Ovary (tissue), 10 donors: ENCODE measurements at regions of chr7 and their contacts with region 1.

Region 1: GRCh38 chr7:44240983-44241510 is 40.3 kb downstream of the YKT6 start:
- DNase-seq: peak; percentile 63 to 73 (median 72)
- H3K4me3 ChIP-seq: no peak overlapping the region
- H3K27ac ChIP-seq: no peak overlapping the region
- H3K4me1 ChIP-seq: no peaks in the 10 kb centered on the region
- H3K27me3 ChIP-seq: no peaks in the 10 kb centered on the region
- CTCF ChIP-seq: peak; percentile 34 to 64 (median 51)
- EP300 ChIP-seq: no peak
- POLR2A ChIP-seq: no peak

Region 2: GRCh38 chr7:44477063-44477830 is 236.2 kb after region 1 on chr7:
- intact Hi-C with region 1: loop called in 3 of 4 experiments (anchors 2 to 10 kb)
- DNase-seq: peak in 4 of 5 donors; percentile 12 to 45 (median 27)
- H3K4me3 ChIP-seq: no peak overlapping the region
- H3K27ac ChIP-seq: no peak overlapping the region
- H3K4me1 ChIP-seq: no peaks in the 10 kb centered on the region
- H3K27me3 ChIP-seq: no peaks in the 10 kb centered on the region
- CTCF ChIP-seq: peak in 2 of 3 donors; percentile 55 to 58
- EP300 ChIP-seq: no peak
- POLR2A ChIP-seq: no peak

Region 3: GRCh38 chr7:44490351-44491200 is 249.5 kb after region 1 on chr7 and contains the start of gene NUDCD3:
- intact Hi-C with region 1: loop called in 1 of 4 experiments (anchors 5 kb)
- DNase-seq: peak; percentile 77 to 86 (median 80)
- H3K4me3 ChIP-seq: peak within 1 kb of the TSS; percentile 83
- H3K27ac ChIP-seq: peak within 1 kb of the TSS; percentile 90 to 97
- H3K4me1 ChIP-seq: peaks cover 11% of the 10 kb centered on the region
- H3K27me3 ChIP-seq: no peaks in the 10 kb centered on the region
- CTCF ChIP-seq: peak in 1 of 3 donors; percentile 21
- EP300 ChIP-seq: peak; percentile 37
- POLR2A ChIP-seq: peak; percentile 45
- total RNA-seq, gene NUDCD3: 32.1 to 117 (median 102) TPM

Region 4: DNA sequence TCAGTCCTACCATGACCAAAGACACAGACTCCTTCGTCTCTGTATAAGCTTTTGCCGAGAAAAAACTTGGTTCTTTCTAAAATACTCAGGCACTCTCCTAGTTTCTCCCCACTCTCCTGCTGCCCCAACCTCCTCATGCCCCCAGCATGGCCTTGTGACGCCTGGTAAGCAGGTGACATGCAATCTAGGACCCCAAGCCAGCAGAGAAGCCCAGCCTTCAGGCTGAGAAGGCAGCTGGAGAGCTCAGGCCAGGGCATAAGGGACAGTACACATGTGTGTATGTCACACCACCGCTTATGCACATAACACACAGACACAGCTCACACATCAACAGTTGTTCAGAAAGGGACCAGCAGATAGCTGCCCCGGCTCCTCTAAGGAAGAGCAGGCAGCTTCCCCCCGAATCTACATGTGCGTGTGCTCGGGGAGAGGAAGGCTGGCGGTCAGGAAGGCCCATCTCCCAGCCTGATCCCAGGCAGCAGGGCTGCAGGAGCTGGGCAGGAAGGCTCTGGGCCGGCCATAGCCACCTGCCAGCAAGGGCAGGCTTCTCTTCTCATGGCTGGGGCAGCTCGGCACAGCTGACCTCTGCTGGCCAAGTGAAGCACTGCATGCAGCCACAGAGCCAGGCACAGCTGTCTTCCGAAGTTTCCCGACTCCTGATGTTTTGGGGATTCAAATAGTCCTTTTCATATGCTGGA is 324.2 kb after region 1 on chr7:
- intact Hi-C with region 1: loop called (anchors 2 to 10 kb)
- DNase-seq: peak; percentile 36 to 81 (median 68)
- H3K4me3 ChIP-seq: no peak overlapping the region
- H3K27ac ChIP-seq: no peak overlapping the region
- H3K4me1 ChIP-seq: no peaks in the 10 kb centered on the region
- H3K27me3 ChIP-seq: no peaks in the 10 kb centered on the region
- CTCF ChIP-seq: peak; percentile 75 to 86 (median 81)
- EP300 ChIP-seq: no peak
- POLR2A ChIP-seq: no peak